ENCODE measurements at regions of chr12 and their contacts with region 1.

Region 1: DNA sequence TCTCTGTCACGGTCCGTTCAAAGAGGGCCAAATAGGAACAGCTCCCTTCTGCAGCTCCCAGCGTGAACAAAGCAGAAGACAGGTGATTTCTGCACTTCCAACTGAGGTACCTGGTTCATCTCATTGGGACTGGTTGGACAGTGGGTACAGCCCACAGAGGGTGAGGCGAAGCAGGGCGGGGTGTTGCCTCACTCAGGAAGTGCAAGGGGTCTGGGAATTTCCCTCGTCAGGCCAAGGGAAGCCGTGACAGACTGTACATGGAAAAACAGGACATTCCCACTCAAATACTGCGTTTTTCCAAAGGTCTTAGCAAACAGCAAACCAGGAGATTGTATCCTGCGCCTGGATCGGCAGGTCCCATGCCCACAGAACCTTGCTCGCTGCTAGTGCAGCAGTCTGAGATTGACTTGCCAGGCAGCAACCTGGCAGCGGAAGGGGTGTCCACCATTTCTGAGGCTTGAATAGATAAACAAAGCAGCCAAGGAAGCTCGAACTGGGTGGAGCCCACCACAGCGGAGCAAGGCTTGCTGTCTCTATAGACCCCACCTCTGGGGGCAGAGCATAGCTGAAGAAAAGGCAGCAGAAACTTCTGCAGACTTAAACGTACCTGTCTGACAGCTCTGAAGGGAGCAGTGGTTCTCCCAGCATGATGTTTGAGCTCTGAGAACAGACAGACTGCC is 22.7 kb downstream of the SLC38A1 start:
- DNase-seq: peak in 8 of 9 experiments; percentile 29 to 82 (median 46)
- ATAC-seq: peak; percentile 89
- H3K4me3 ChIP-seq: no peak overlapping the region
- H3K4me3 Mint-ChIP-seq: peak overlapping the region; percentile 64
- H3K27ac ChIP-seq: peak overlapping the region in 1 of 2 experiments; percentile 59
- H3K27ac Mint-ChIP-seq: peak overlapping the region; percentile 86
- H3K4me1 ChIP-seq: peaks cover 57% of the 10 kb centered on the region
- H3K4me1 Mint-ChIP-seq: peaks cover 92% of the 10 kb centered on the region
- H3K27me3 ChIP-seq: no peaks in the 10 kb centered on the region
- H3K27me3 Mint-ChIP-seq: no peaks in the 10 kb centered on the region
- CTCF ChIP-seq: no peak

Region 2: GRCh38 chr12:46174061-46174662 is 72.0 kb before region 1 on chr12:
- CTCF ChIA-PET with region 1: no interaction called
- POLR2A ChIA-PET with region 1: no interaction called
- intact Hi-C with region 1: no loop called
- DNase-seq: no peak
- ATAC-seq: no peak
- H3K4me3 ChIP-seq: no peak overlapping the region
- H3K4me3 Mint-ChIP-seq: no peak overlapping the region
- H3K27ac ChIP-seq: no peak overlapping the region
- H3K27ac Mint-ChIP-seq: no peak overlapping the region
- H3K4me1 ChIP-seq: peaks cover 23% of the 10 kb centered on the region
- H3K4me1 Mint-ChIP-seq: peaks cover 32% of the 10 kb centered on the region
- H3K27me3 ChIP-seq: no peaks in the 10 kb centered on the region
- H3K27me3 Mint-ChIP-seq: no peaks in the 10 kb centered on the region
- CTCF ChIP-seq: no peak

Region 3: DNA sequence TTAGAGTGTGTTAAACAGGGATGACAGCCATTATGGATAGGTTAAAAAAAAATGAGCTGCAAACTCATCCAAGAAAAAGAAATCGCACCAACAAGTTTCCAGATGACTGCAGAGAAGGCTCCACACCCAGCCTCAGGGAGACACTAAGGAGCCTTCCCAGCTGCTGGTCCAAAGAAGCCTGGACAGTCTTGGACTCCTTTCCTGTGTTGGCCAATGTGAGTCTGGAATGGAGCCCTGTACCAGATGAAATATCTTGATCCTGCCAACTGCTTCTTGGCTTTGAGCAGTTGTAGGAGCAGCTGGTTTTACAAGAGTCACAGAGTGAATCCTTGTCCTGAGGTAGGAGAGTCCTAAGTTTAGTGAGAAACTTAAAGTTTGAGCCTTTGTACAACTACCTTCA is 21.8 kb before region 1 on chr12:
- CTCF ChIA-PET with region 1: interaction called, 3 read pairs
- POLR2A ChIA-PET with region 1: interaction called, 3 read pairs
- intact Hi-C with region 1: loop called in 1 of 2 experiments (anchors 2 kb)
- DNase-seq: no peak
- ATAC-seq: no peak
- H3K4me3 ChIP-seq: no peak overlapping the region
- H3K4me3 Mint-ChIP-seq: no peak overlapping the region
- H3K27ac ChIP-seq: peak overlapping the region in 1 of 2 experiments; percentile 22
- H3K27ac Mint-ChIP-seq: peak overlapping the region; percentile 87
- H3K4me1 ChIP-seq: peaks cover 70% of the 10 kb centered on the region
- H3K4me1 Mint-ChIP-seq: peaks cover 93% of the 10 kb centered on the region
- H3K27me3 ChIP-seq: no peaks in the 10 kb centered on the region
- H3K27me3 Mint-ChIP-seq: no peaks in the 10 kb centered on the region
- CTCF ChIP-seq: no peak

Region 4: GRCh38 chr12:46260151-46260918 is 14.2 kb after region 1 on chr12:
- CTCF ChIA-PET with region 1: interaction called, 4 read pairs
- POLR2A ChIA-PET with region 1: interaction called, 3 read pairs
- intact Hi-C with region 1: loop called (anchors 2 kb)
- DNase-seq: no peak
- ATAC-seq: no peak
- H3K4me3 ChIP-seq: no peak overlapping the region
- H3K4me3 Mint-ChIP-seq: no peak overlapping the region
- H3K27ac ChIP-seq: peak overlapping the region in 1 of 2 experiments; percentile 33
- H3K27ac Mint-ChIP-seq: no peak overlapping the region
- H3K4me1 ChIP-seq: peaks cover 94% of the 10 kb centered on the region
- H3K4me1 Mint-ChIP-seq: peaks cover 54% of the 10 kb centered on the region
- H3K27me3 ChIP-seq: no peaks in the 10 kb centered on the region
- H3K27me3 Mint-ChIP-seq: no peaks in the 10 kb centered on the region
- CTCF ChIP-seq: no peak

Region 5: GRCh38 chr12:46332260-46332659 is 86.1 kb after region 1 on chr12:
- CTCF ChIA-PET with region 1: no interaction called
- POLR2A ChIA-PET with region 1: no interaction called
- intact Hi-C with region 1: no loop called
- DNase-seq: no peak
- ATAC-seq: no peak
- H3K4me3 ChIP-seq: no peak overlapping the region
- H3K4me3 Mint-ChIP-seq: no peak overlapping the region
- H3K27ac ChIP-seq: no peak overlapping the region
- H3K27ac Mint-ChIP-seq: no peak overlapping the region
- H3K4me1 ChIP-seq: no peaks in the 10 kb centered on the region
- H3K4me1 Mint-ChIP-seq: no peaks in the 10 kb centered on the region
- H3K27me3 ChIP-seq: no peaks in the 10 kb centered on the region
- H3K27me3 Mint-ChIP-seq: no peaks in the 10 kb centered on the region
- CTCF ChIP-seq: no peak

Region 6: DNA sequence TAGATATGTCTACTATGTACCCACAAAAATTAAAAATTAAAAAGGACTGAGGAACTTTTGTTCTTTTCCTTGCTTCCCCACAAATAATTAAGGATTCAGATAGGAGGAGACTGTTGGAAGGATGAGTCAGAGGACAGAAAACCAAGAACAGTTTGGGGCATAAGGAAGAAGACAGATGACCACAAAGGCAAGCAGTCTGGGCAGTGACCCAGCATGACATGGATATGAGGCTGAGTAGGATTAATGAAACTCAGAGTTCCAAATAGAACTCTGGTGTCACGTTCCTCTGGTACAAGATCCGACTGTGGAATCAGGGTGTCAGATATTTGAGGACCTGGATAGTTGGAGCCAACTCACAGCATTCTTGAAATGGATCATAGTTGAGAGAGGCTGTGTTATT is 668.9 kb after region 1 on chr12:
- CTCF ChIA-PET with region 1: no interaction called
- POLR2A ChIA-PET with region 1: no interaction called
- intact Hi-C with region 1: no loop called
- DNase-seq: no peak
- ATAC-seq: no peak
- H3K4me3 ChIP-seq: no peak overlapping the region
- H3K4me3 Mint-ChIP-seq: no peak overlapping the region
- H3K27ac ChIP-seq: no peak overlapping the region
- H3K27ac Mint-ChIP-seq: no peak overlapping the region
- H3K4me1 ChIP-seq: no peaks in the 10 kb centered on the region
- H3K4me1 Mint-ChIP-seq: no peaks in the 10 kb centered on the region
- H3K27me3 ChIP-seq: peaks cover 0 to 2% of the 10 kb centered on the region in 2 experiments
- H3K27me3 Mint-ChIP-seq: peaks cover 7% of the 10 kb centered on the region
- CTCF ChIP-seq: no peak